Dorsolateral prefrontal cortex (tissue), 120 donors: ENCODE measurements at regions of chr11 and their contacts with region 1.

Region 1: DNA sequence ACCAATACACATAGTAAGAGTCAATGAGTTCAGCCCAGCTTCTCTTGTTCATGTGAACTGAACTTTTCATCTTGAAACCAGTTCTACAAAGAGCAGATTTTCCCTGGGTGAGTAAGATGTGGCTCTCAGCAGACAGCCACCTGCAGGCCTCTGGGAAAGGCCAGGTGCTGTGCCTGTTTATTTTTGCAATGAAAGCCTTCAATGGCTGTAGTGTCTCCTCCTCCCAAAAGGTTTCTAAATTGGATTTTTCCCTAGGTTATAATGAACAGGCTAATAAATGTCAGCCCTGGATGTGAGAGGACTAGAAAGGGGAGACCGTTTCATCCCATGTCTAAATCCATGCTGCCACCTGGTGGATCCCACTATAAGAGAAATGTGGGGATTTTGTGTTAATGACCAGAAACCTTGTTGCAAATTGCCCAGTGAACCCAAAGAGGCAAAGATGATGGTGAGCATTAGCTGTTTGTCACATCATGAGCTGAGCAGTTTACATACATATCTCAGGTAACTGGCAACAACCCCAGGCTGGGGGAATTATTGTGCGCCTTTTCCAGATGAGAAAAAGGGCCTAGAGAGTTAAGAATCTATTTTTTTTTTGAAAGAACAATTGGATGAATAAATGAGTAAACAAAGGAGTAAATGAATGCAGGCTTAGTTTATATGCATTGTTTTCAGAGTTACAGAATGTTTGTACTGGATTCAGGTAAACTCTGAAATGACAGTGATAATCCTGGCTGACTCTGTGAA is 12.7 kb downstream of the C11orf91 start:
- DNase-seq: peak in 5 of 10 donors; percentile 53 to 77 (median 64)
- H3K4me3 ChIP-seq: no peak overlapping the region
- H3K27ac ChIP-seq: no peak overlapping the region
- H3K27me3 ChIP-seq: no peaks in the 10 kb centered on the region
- CTCF ChIP-seq: peak; percentile 41 to 94 (median 81)

Region 2: GRCh38 chr11:33161120-33162005 is 526.5 kb before region 1 on chr11 and contains the start of gene CSTF3:
- intact Hi-C with region 1: loop called in 1 of 2 experiments (anchors 5 kb)
- DNase-seq: peak; percentile 100
- H3K4me3 ChIP-seq: peak within 1 kb of the TSS; percentile 63 to 97 (median 86)
- H3K27ac ChIP-seq: peak within 1 kb of the TSS; percentile 41 to 95 (median 87)
- H3K27me3 ChIP-seq: no peaks in the 10 kb centered on the region
- CTCF ChIP-seq: peak in 55 of 56 donors; percentile 19 to 76 (median 58)
- total RNA-seq, gene CSTF3: 20.9 to 50.5 (median 35.5) TPM

Region 3: DNA sequence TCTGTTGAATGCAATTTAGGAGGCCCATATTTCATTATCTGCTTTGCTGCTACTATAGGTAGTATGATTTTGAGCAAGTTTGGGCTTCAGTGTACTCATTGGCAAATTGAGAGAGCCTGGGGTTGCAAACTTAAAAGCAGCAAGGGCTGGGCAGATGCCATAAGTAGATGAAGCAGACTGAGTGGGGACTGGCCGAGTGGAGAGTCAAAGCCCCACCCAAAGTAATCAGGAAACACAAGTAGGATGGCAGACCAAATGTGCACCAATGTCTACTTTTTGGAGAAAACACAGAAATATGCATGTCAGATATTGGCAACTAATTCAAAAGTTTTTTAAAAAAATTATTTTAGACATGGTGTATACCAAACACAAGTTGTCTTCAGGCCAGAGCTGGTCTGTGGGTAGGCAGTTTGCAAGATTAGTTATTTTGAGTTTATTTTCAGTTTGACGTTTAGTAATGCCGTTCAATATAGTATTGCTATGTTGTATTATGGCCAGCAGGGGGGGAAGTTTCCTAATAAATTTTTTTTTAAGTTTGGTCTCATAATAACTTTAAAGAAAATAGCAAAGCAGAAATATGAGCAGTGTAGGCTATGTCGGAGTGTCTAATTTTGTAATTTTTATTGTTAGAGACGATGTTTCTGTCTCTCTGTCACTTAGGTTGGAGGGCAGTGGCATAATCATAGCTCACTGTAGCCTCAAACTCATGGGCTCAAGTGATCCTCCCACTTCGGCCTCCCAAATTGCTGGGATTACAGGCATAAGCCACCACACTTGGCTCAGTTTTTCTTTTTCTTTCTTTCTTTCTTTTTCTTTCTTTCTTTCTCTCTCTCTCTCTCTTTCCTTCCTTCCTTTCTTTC is 325.6 kb before region 1 on chr11:
- intact Hi-C with region 1: loop called (anchors 2 to 5 kb)
- DNase-seq: no peak
- H3K4me3 ChIP-seq: no peak overlapping the region
- H3K27ac ChIP-seq: no peak overlapping the region
- H3K27me3 ChIP-seq: no peaks in the 10 kb centered on the region
- CTCF ChIP-seq: peak; percentile 64 to 97 (median 80)

Region 4: DNA sequence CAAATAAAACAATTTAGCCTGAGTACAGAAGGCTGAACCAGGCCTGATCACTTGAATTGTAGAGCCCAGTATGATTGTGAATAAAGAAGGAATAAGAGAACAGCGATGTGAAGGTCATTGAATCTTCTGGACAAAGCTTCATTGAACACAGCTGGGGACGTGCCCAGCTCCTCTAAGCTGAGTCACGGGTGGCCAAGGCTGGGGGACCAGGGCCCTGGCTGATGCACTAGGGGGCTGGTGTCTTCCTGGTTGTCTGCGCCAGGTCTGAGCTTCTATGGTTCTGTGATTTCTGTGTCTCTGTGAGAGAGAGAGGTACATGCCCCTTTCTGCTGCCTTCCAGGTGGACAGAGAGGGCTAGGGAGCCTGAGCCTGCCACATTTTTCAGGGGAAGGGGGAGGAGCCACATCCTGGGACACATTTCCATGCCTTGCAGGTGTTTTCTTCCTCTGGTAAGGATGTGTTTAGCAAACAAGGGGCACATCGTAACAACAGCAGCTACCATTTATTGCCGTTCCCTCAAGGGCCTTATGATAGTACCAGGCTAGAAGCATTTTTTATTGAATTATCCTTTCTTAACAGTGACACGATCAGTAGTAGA is 123.0 kb before region 1 on chr11:
- intact Hi-C with region 1: loop called in 1 of 2 experiments (anchors 10 kb)
- DNase-seq: peak in 8 of 10 donors; percentile 37 to 72 (median 60)
- H3K4me3 ChIP-seq: no peak overlapping the region
- H3K27ac ChIP-seq: peak overlapping the region; percentile 4 to 93 (median 85)
- H3K27me3 ChIP-seq: no peaks in the 10 kb centered on the region
- CTCF ChIP-seq: peak in 2 of 56 donors; percentile 9 to 25

Region 5: DNA sequence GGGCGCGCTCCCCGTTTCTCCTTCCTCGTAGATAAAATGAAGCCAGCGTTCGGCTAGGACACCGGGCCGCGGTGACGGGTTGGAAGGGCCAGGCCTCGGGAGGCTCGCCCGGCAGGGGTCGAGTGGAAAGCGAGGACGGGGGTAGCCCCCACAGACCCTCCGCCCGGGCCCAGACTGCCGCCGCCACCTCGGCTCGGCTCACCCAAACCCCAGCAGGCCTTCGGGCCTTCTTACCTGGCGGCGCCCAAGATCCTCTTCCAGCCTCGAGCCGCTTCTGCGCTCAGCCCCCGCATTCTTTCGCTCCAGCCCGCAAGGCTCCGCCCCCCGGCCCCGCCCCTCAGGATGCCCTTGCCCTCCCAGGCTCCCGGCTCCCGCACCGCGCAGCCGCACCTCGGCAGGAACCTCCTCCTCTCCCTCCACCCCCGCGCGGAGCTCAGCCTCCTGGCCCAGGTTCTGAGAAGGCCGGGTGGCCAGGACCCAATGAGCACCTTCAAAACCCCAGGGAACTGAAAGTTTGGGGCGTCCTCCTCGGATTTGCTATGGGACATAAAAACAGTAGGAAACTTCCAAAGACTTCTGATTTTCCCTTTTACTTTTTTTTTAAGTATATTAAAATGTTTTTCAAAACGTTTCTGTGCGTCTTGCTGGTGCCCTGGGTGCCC is 48.4 kb after region 1 on chr11 and contains the start of gene CD59:
- intact Hi-C with region 1: loop called in 1 of 2 experiments (anchors 2 kb)
- DNase-seq: peak; percentile 83 to 98 (median 92)
- H3K4me3 ChIP-seq: peak within 1 kb of the TSS; percentile 67 to 98 (median 91)
- H3K27ac ChIP-seq: peak within 1 kb of the TSS in 58 of 59 donors; percentile 17 to 98 (median 87)
- H3K27me3 ChIP-seq: no peaks in the 10 kb centered on the region
- CTCF ChIP-seq: peak in 4 of 56 donors; percentile 10 to 35 (median 18)
- total RNA-seq, gene CD59: 235 to 598 (median 367) TPM